Natural killer cell (primary cell): ENCODE measurements at regions of chr7 and their contacts with region 1.

Region 1: DNA sequence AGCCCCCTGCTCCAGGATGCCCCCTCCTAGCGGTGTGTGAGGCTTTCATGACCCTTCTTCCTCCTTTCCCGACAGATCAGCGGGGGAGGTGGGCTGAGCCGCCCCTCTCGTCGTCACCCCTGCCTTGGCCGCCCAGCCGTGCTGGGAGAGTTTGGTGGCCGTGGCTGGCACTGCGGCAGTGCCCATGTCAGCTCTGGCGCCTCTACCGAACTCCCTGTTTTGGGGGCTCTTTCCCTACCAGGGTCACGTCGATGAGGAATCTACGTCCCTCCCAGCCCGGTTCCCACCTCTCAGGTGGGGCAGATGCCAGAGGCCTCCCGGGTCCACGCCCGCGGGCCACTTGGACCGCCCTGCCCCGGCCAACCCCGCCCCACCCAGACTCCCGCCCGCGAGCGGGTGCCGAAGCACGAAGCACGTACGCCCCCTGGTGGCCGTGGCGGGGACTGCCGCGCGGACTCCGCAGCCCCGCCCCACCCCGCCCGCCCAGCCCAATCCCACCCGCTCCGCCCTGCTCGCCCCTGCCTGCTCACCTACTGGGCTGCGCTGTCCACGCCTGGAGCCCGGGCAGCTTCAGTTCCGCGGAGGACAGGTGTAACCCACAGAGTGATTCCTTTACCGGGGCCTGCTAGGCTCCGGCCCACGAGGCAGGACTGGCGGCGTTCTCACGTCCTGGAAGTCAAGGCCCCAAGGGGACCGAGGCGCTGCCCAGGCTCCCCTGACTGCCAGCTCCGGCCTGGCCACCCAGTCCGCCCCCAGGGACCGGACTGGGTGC is 127.1 kb downstream of the UBE2H start:
- DNase-seq: peak; percentile 86 to 91
- ATAC-seq: peak; percentile 92 to 95 (median 92)
- H3K4me3 ChIP-seq: peak overlapping the region; percentile 62
- H3K4me3 Mint-ChIP-seq: peak overlapping the region; percentile 90
- H3K27ac ChIP-seq: no peak overlapping the region
- H3K27ac Mint-ChIP-seq: peak overlapping the region in 1 of 2 donors; percentile 81
- H3K4me1 ChIP-seq: peaks cover 31% of the 10 kb centered on the region
- H3K4me1 Mint-ChIP-seq: peaks cover 26 to 29% of the 10 kb centered on the region in 2 donors
- H3K27me3 ChIP-seq: no peaks in the 10 kb centered on the region
- H3K27me3 Mint-ChIP-seq: no peaks in the 10 kb centered on the region
- CTCF ChIP-seq: peak; percentile 93

Region 2: GRCh38 chr7:129332284-129333035 is 493.2 kb before region 1 on chr7:
- intact Hi-C with region 1: no loop called
- DNase-seq: no peak
- ATAC-seq: no peak
- H3K4me3 ChIP-seq: no peak overlapping the region
- H3K4me3 Mint-ChIP-seq: no peak overlapping the region
- H3K27ac ChIP-seq: no peak overlapping the region
- H3K27ac Mint-ChIP-seq: no peak overlapping the region
- H3K4me1 ChIP-seq: no peaks in the 10 kb centered on the region
- H3K4me1 Mint-ChIP-seq: no peaks in the 10 kb centered on the region
- H3K27me3 ChIP-seq: no peaks in the 10 kb centered on the region
- H3K27me3 Mint-ChIP-seq: no peaks in the 10 kb centered on the region
- CTCF ChIP-seq: no peak

Region 3: DNA sequence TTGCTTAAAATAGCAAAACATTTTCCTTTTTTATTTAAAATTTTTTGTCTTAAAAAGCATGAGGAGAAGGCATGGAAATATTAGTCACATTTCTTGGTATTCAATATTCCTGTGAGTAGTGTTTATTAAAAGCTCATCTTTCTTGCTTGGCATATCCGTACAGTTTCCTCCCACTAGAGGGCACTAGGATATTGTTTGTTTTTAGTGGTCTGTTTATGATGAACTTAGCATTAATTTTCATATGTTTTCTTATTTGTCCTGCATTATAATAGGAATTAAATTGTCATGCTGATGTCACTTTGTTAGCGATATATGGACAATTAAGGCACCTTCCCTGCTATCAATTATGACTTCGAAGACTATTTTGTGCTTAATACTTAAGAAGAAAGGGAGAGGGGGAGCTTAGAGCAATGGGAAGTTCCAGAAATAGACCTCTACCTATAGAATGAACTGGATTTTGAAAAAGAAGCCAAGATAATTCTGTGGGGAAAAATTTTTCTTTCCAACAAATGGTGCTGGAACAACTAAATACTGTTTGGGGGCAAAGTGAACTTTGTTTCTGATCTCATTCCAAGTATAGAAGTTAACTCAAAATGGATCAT is 482.5 kb before region 1 on chr7:
- intact Hi-C with region 1: loop called (anchors 1 kb)
- DNase-seq: peak in 1 of 2 donors; percentile 65
- ATAC-seq: peak in 2 of 3 donors; percentile 59 to 70
- H3K4me3 ChIP-seq: no peak overlapping the region
- H3K4me3 Mint-ChIP-seq: no peak overlapping the region
- H3K27ac ChIP-seq: no peak overlapping the region
- H3K27ac Mint-ChIP-seq: no peak overlapping the region
- H3K4me1 ChIP-seq: peaks cover 3% of the 10 kb centered on the region
- H3K4me1 Mint-ChIP-seq: peaks cover 17 to 18% of the 10 kb centered on the region in 2 donors
- H3K27me3 ChIP-seq: no peaks in the 10 kb centered on the region
- H3K27me3 Mint-ChIP-seq: no peaks in the 10 kb centered on the region
- CTCF ChIP-seq: peak; percentile 77

Region 4: DNA sequence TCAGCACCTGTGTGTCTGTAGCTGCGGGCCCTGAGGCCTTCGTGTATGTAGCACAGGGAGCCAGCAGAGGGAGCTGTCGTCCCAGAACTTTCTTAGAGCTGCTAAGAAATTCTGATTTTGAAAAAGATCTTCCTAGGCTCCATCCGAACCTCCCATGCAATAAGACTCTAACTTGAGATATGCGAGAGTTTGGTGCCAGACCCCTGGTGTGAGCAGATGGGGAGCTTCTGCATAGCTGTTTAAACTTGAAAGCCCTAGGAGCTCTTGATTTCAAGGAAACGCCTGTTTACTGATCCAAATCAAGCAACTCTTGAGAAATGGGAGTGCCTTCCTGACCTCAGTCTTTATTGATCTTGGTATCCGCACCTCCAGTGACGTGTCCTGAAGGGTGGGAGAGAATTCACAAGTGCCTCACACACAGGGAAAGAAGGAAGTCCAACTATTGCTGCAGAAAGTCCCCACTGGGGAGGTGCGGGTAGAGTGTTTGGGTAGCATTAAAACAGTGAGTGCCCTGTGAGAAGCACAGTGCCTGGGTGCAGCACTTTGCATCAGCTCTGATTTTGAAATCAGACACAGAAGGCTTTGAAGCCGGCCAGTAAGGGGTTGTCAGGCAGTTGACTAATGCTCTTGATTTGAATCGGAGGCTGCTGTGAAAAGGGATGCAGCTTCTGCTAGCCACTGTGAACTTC is 457.8 kb before region 1 on chr7:
- intact Hi-C with region 1: loop called (anchors 1 kb)
- DNase-seq: peak; percentile 62 to 86
- ATAC-seq: peak; percentile 78 to 82 (median 78)
- H3K4me3 ChIP-seq: no peak overlapping the region
- H3K4me3 Mint-ChIP-seq: peak overlapping the region; percentile 73
- H3K27ac ChIP-seq: peak overlapping the region; percentile 28
- H3K27ac Mint-ChIP-seq: peak overlapping the region; percentile 14 to 81
- H3K4me1 ChIP-seq: peaks cover 14% of the 10 kb centered on the region
- H3K4me1 Mint-ChIP-seq: peaks cover 19 to 23% of the 10 kb centered on the region in 2 donors
- H3K27me3 ChIP-seq: no peaks in the 10 kb centered on the region
- H3K27me3 Mint-ChIP-seq: peaks cover 0 to 2% of the 10 kb centered on the region in 2 donors
- CTCF ChIP-seq: peak; percentile 93

Region 5: GRCh38 chr7:129652914-129653313 is 172.8 kb before region 1 on chr7:
- intact Hi-C with region 1: no loop called
- DNase-seq: no peak
- ATAC-seq: no peak
- H3K4me3 ChIP-seq: no peak overlapping the region
- H3K4me3 Mint-ChIP-seq: no peak overlapping the region
- H3K27ac ChIP-seq: no peak overlapping the region
- H3K27ac Mint-ChIP-seq: no peak overlapping the region
- H3K4me1 ChIP-seq: peaks cover 3% of the 10 kb centered on the region
- H3K4me1 Mint-ChIP-seq: peaks cover 32% of the 10 kb centered on the region in 2 donors
- H3K27me3 ChIP-seq: no peaks in the 10 kb centered on the region
- H3K27me3 Mint-ChIP-seq: no peaks in the 10 kb centered on the region
- CTCF ChIP-seq: no peak

Region 6: DNA sequence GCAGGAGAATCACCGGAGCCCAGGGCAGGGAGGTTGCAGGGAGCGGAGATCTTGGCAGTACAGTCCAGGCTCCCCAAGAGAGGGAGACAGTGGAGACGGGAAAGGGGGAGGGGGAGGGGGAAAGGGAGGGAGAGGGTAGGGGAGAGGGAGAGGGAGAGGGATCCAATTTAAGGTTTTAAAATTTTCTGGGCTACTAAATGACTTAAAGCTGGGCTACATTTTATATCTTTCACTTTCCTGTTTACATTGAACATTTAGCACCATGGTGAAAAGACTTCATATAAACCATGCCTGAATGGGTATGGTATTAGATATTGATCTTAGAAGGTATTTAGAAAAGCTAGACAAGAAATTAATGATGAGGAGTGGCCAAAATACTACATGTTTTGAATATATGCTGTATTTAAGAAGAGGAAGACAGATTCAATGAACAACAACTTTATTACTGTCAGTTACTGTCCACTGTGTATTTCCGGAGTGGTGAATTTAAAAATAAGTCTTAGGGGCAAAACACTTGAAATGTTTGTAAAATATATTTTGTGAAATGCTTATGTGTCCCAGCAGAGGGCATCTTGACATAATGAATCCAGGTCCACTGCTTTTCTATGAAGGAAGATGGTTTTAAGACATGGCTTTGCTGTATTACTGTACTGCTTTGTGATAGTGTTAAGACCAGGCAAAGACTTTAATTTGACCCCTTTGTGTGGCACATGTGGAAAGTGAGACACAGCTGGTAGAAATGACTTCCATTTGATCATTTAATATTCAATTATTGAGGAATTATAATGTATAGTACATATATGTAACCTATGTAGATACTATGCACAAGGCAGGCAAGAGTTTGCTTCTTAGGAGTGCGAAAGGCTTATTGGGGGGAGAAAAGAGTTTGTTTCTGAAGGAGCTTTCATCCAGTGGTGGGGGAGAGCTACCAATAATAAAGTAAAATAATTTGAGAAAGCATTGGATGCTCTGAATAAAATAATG is 161.4 kb before region 1 on chr7:
- intact Hi-C with region 1: loop called (anchors 10 kb)
- DNase-seq: peak in 1 of 2 donors; percentile 34
- ATAC-seq: peak in 2 of 3 donors; percentile 40 to 42
- H3K4me3 ChIP-seq: no peak overlapping the region
- H3K4me3 Mint-ChIP-seq: no peak overlapping the region
- H3K27ac ChIP-seq: no peak overlapping the region
- H3K27ac Mint-ChIP-seq: peak overlapping the region in 1 of 2 donors; percentile 5
- H3K4me1 ChIP-seq: no peaks in the 10 kb centered on the region
- H3K4me1 Mint-ChIP-seq: peaks cover 13 to 21% of the 10 kb centered on the region in 2 donors
- H3K27me3 ChIP-seq: no peaks in the 10 kb centered on the region
- H3K27me3 Mint-ChIP-seq: no peaks in the 10 kb centered on the region
- CTCF ChIP-seq: peak; percentile 28

Region 7: DNA sequence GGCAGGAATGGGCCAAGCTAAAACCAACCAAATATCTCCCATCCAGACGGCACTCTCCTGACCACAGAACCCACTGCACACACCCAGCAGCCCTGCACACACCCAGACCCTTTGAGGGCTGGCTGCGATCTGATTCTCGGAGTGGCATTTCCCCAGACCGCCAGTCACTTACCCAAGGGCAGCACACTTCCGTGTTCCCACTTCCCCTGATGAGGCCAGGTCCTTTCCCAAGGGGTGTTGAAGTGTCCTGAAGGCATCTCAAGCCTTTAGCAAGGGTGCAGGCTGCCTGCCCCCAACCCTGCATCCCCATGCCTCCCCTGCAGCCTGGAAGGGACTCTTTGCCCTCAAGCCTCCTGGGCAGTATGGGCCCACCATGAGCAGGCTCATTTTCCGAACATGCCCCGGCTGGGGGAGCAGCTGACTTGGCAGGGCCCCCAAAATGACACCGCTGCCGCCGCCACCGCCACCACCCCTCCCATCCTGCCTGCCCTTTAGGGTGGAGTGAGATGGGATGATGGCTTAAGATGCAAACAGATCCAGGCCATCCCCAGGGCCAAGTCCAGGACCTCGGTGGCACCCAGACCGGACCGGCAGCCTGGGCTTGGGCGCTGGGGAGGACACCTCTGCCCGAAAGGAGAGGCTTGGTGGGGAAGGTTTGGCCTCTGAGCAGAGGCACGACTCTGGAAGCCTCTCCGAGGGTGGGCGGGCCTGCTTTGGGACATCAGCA is 54.3 kb before region 1 on chr7:
- intact Hi-C with region 1: no loop called
- DNase-seq: no peak
- ATAC-seq: no peak
- H3K4me3 ChIP-seq: no peak overlapping the region
- H3K4me3 Mint-ChIP-seq: no peak overlapping the region
- H3K27ac ChIP-seq: no peak overlapping the region
- H3K27ac Mint-ChIP-seq: no peak overlapping the region
- H3K4me1 ChIP-seq: peaks cover 28% of the 10 kb centered on the region
- H3K4me1 Mint-ChIP-seq: peaks cover 22 to 33% of the 10 kb centered on the region in 2 donors
- H3K27me3 ChIP-seq: no peaks in the 10 kb centered on the region
- H3K27me3 Mint-ChIP-seq: peaks cover 0 to 5% of the 10 kb centered on the region in 2 donors
- CTCF ChIP-seq: no peak

Region 8: DNA sequence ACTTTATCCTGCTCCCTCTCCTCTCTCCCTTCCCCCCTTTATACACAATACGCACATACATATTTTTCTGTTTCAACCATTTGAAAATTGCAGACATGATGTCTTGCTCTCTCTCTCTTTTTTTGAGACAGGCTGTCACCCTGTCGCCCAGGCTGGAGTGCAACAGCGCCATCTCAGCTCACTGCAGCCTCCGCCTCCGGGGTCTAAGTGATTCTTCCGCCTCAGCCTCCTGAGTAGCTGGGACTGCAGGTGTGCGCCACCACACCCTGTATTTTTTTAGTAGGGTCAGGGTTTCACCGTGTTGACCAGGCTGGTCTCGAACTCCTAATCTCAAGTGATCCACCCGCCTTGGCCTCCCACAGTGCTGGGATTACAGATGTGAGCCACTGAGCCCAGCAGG is 283.1 kb after region 1 on chr7:
- intact Hi-C with region 1: no loop called
- DNase-seq: no peak
- ATAC-seq: no peak
- H3K4me3 ChIP-seq: no peak overlapping the region
- H3K4me3 Mint-ChIP-seq: no peak overlapping the region
- H3K27ac ChIP-seq: no peak overlapping the region
- H3K27ac Mint-ChIP-seq: no peak overlapping the region
- H3K4me1 ChIP-seq: no peaks in the 10 kb centered on the region
- H3K4me1 Mint-ChIP-seq: peaks cover 0 to 5% of the 10 kb centered on the region in 2 donors
- H3K27me3 ChIP-seq: no peaks in the 10 kb centered on the region
- H3K27me3 Mint-ChIP-seq: no peaks in the 10 kb centered on the region
- CTCF ChIP-seq: no peak